ENCODE measurements at regions of chr5 and their contacts with region 1.

Region 1: DNA sequence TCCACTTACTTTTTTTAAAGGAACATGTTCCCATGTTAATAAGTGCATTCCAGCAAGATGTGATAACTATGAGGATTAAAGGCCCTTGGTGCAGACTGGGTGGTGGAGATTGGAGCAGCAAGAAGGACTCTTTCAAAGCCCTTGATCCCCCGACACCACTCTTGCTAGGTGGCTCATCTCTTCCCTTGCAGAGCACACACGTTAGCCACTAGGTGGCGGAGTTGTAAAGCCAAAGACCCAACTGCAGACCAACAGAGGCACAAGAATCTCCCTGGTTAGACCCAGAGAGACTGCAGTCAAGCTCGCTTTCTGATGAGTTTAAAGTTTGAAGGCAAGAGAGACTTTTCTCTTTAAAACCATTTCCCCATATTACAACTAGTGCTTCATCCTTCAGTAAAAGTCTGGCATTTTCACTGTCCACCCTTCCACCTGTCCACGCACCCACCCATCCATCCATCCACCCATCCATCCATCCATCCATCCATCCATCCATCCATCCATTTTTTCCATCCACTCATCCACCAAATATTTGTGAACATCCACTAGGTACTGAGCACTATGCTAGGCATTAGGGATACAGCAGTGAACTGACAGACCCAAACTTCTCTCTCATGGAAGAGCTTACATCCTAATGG is 226.9 kb downstream of the MSX2 start:
- DNase-seq: peak in 2 of 3 donors; percentile 25 to 53
- ATAC-seq: peak; percentile 77
- H3K4me3 ChIP-seq: no peak overlapping the region
- H3K4me1 ChIP-seq: no peaks in the 10 kb centered on the region
- CTCF ChIP-seq: peak; percentile 48

Region 2: DNA sequence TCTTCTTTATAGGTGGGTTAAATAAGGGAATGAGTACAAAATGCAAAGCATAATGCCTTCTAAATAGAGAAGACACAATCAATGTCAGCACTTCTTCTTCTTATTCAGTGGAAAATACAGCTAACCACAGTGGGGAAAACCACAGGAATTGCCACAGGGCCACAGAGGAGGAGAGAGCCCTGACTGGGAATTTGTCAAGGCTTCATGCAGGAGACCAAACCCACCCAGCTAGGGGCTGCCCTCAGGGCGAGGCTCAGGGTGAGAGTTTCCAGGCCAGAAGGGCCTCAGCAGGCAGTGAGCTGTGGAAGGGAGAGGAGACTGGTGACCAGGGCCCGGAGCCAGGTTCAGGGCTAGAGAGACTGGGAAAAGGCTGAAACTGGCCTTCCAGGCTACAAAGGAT is 52.3 kb after region 1 on chr5:
- intact Hi-C with region 1: no loop called
- DNase-seq: no peak
- ATAC-seq: no peak
- H3K4me3 ChIP-seq: no peak overlapping the region
- H3K4me1 ChIP-seq: no peaks in the 10 kb centered on the region
- CTCF ChIP-seq: no peak

Region 3: DNA sequence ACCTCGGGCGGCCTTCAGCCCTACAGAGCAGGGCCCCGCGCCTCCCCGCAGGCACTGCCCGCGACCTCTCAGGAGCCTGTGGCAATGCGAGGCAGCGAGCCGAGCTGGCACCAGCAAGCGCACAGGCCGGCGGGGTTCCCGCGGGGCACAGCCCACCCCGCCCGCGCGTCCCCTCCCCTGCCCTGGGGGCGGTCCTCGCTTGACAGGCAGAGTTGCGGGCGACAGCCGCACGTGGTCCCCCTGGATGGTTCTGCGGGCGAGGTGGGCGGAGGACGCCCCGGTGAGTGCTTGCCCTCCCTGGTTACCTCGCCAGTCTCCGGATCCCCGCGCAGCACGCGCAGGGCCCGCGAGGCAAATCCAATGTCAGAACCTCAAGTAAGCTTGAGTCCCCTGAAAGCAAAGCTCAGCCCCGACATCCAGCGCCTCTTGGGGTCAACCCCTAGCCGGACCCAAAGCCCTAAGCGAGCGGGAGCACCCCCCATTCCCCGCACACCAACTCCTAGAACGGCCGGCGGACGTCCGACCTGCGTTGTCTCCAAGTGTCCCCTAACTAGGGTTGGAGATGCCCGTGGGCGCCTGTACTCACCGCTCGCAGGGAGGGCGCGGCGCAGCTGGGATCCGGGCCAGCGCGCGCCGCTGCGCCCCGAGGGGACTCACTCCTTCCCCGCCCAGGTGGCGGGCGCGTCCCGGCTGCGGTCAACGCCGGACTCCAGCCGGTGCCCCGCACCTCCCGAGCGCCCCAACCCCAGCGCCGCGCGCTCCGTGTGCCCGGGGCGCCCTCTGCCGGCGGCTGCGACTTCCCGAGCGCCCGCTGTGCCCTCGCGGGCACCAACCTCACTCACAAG is 493.0 kb after region 1 on chr5 and contains the start of gene DRD1:
- intact Hi-C with region 1: loop called (anchors 10 kb)
- DNase-seq: peak in 2 of 3 donors; percentile 56 to 61
- ATAC-seq: peak; percentile 92
- H3K4me3 ChIP-seq: no peak within 1 kb of the TSS
- H3K4me1 ChIP-seq: no peaks in the 10 kb centered on the region
- CTCF ChIP-seq: peak; percentile 70
- total RNA-seq, gene DRD1: 0.09 TPM in 1 of 3 donors, not detected in the others

Measured in mucosa of descending colon (tissue), 3 donors.